AG04449 (cell line): ENCODE measurements at regions of chr11 and their contacts with region 1.

Region 1: GRCh38 chr11:33742249-33742851 is 6.1 kb upstream of the CD59 start:
- DNase-seq: no peak
- H3K4me3 ChIP-seq: no peak overlapping the region
- CTCF ChIP-seq: peak; percentile 14

Region 2: DNA sequence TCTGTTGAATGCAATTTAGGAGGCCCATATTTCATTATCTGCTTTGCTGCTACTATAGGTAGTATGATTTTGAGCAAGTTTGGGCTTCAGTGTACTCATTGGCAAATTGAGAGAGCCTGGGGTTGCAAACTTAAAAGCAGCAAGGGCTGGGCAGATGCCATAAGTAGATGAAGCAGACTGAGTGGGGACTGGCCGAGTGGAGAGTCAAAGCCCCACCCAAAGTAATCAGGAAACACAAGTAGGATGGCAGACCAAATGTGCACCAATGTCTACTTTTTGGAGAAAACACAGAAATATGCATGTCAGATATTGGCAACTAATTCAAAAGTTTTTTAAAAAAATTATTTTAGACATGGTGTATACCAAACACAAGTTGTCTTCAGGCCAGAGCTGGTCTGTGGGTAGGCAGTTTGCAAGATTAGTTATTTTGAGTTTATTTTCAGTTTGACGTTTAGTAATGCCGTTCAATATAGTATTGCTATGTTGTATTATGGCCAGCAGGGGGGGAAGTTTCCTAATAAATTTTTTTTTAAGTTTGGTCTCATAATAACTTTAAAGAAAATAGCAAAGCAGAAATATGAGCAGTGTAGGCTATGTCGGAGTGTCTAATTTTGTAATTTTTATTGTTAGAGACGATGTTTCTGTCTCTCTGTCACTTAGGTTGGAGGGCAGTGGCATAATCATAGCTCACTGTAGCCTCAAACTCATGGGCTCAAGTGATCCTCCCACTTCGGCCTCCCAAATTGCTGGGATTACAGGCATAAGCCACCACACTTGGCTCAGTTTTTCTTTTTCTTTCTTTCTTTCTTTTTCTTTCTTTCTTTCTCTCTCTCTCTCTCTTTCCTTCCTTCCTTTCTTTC is 380.1 kb before region 1 on chr11:
- CTCF ChIA-PET with region 1: interaction called, 18 read pairs
- POLR2A ChIA-PET with region 1: no interaction called
- DNase-seq: no peak
- H3K4me3 ChIP-seq: no peak overlapping the region
- CTCF ChIP-seq: no peak

Region 3: DNA sequence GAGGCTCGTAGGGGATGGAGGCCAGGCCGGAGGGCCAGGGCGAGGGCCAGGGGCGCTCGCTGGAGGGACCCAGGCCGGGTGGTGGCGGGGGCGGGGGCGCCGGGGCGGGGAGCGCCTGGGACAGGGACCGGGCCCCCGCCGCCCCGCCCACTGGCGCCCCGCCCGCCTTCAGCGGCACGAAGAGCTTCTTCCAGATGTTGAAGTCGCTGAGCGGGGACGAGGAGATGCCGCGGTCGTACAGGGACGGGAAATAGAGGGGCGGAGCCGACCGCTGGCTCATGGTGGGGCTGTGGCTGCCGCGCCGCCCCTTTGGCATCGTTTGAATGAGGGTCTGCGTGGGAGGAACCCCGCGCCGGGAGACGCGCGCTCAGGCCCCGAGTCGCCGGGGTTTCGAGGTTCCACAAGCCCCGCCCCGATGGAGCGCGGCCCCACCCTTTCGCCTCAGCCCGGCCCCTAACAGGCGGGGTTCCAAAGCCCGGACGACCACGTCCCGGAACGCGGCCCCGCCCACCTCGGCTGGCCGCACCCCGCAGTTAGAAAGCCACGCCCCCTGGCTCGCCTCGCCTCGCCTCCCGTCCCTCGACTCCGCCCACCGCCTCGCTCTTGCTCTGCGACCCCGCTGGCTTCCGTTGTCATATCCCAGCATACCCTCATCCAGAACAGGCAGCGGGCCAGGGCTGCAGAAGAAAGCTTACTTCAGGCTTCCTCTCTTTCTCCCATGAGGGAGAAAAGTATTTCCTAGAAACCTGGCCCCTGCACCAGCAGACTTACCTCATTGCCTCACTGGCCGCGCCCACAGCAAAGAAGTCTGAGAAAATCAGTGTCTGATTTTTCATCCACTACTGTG is 41.7 kb before region 1 on chr11 and contains the start of gene C11orf91:
- CTCF ChIA-PET with region 1: interaction called, 110 read pairs
- POLR2A ChIA-PET with region 1: interaction called, 13 read pairs
- DNase-seq: peak; percentile 64
- H3K4me3 ChIP-seq: peak within 1 kb of the TSS; percentile 67
- CTCF ChIP-seq: no peak

Region 4: GRCh38 chr11:33709466-33709865 is 32.9 kb before region 1 on chr11:
- CTCF ChIA-PET with region 1: interaction called, 50 read pairs
- POLR2A ChIA-PET with region 1: no interaction called
- DNase-seq: no peak
- H3K4me3 ChIP-seq: no peak overlapping the region
- CTCF ChIP-seq: no peak

Region 5: DNA sequence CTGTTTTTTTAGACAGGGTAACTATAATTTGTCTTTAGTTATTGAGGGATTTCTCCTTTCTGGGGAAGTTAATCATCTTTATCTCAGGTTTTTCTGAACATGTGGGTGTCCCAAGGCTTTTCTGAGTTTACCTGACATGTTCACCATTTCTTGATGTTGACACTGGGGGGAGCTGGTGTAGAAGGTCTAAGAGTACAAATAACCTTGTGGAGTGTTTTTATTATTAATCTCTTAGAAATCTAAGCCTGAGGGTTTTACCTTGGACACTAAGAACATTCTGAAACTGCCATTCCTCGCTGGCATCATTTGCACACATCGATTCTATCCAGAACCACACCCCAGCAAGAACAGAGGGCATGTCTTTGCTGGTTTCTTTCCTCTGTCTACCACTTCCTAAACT is 26.1 kb before region 1 on chr11:
- CTCF ChIA-PET with region 1: interaction called, 50 read pairs
- POLR2A ChIA-PET with region 1: interaction called, 3 read pairs
- DNase-seq: no peak
- H3K4me3 ChIP-seq: no peak overlapping the region
- CTCF ChIP-seq: peak; percentile 21

Region 6: DNA sequence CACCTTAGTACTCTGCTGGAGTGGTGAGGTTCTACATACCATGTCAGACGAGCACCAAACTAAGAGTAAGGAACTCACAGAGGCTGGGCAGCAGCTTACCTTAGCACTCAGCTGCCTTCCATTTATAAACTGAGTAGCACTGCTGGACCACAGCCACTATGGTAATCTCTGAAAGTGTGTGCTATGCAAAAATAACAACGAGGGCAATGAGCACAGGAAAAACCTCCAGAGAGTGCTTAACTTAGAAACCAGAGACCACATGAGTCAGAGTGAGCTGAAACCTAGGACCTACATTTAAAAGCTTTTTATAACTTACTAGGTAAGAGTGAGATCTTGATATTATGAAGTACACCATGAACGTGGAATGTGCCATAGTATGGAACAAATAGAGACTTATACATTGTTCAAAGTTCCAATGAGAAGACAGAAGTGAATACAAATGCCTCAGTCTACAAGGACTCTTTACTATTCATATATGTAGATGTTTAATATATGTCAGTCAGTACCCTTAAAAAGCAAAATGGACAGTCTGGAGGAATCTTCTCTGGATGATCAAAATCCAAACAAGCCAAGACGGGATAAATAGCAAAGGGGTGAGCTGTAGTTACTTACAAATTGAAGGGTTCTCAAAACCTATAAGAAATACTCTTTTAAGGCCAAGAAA is 11.1 kb after region 1 on chr11:
- CTCF ChIA-PET with region 1: interaction called, 15 read pairs
- POLR2A ChIA-PET with region 1: interaction called, 3 read pairs
- DNase-seq: no peak
- H3K4me3 ChIP-seq: no peak overlapping the region
- CTCF ChIP-seq: no peak

Region 7: DNA sequence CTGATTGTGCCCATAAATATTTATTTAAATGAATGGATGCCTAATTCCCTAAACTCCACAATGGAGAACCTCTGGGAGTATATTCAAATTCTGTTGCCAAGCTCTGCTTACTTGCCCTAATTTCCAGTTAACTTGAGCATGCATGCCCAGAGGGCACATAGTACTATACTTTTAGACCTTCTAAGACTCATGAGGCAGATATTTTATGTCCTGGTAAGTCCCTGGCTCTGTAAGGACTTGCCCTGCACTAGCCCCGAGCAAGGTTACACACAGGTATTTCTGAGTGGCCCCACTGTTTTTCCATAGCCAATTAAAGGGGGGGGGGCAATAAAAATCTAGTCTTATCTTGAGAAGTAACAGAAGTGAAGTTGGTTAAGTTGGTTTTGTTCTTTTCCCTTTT is 288.0 kb after region 1 on chr11:
- CTCF ChIA-PET with region 1: no interaction called
- POLR2A ChIA-PET with region 1: no interaction called
- DNase-seq: no peak
- H3K4me3 ChIP-seq: no peak overlapping the region
- CTCF ChIP-seq: no peak